ENCODE measurements at regions of chr11 and their contacts with region 1.

Region 1: DNA sequence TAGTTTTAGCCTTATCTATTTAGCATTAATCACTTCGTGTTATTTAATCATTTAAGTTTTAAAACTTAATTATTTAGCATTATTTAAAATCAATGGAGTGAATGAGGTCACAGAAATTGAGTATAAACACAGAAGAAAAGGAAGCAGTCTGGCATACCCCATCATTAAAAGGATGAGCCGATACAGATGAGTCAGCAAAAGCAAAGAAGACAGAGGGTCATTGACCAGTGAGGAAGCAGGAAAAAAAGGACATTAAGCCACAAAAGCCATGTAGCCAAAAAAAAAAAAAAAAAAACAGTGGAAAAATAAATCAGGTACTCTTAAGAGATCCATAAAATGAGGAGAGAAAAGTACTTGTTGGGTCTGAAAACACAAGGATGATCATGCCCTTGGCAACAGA is 71.5 kb downstream of the TYR start:
- DNase-seq: no peak
- H3K4me3 ChIP-seq: no peak overlapping the region
- H3K27ac ChIP-seq: no peak overlapping the region
- H3K4me1 ChIP-seq: no peaks in the 10 kb centered on the region
- CTCF ChIP-seq: no peak

Region 2: DNA sequence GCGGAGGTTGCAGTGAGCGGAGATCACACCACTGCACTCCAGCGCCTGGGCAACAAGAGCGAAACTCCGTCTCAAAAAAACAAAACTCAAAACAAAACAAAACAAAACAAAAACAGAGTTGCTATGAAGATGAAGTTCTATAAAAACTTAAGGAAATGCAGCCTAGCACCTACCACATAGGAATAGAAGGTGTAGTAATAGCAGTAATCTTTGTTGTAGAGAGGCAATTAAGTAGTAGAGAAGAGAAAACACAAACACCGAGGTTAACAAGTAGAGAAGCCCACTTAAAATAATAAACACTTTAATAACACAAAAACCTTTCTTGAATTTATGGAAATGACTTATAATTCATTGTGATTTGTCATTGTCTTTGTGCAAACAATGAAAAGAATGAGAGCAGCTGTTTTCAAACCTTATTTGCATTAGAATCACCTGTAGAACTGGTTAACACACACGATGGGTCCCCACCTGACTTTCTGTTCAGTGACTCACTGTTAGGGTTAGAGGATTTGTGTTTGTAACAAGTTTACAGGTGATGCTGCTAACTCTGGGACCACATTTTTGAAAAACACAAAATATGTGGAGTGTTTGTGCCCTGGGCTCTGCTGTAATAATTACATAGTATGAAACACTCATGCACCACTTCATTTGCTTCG is 28.4 kb before region 1 on chr11:
- CTCF ChIA-PET with region 1: no interaction called
- POLR2A ChIA-PET with region 1: no interaction called
- intact Hi-C with region 1: loop called (anchors 1 kb)
- DNase-seq: no peak
- H3K4me3 ChIP-seq: no peak overlapping the region
- H3K27ac ChIP-seq: no peak overlapping the region
- H3K4me1 ChIP-seq: no peaks in the 10 kb centered on the region
- CTCF ChIP-seq: no peak

Region 3: GRCh38 chr11:89463266-89463780 is 214.1 kb after region 1 on chr11:
- CTCF ChIA-PET with region 1: no interaction called
- POLR2A ChIA-PET with region 1: no interaction called
- intact Hi-C with region 1: no loop called
- DNase-seq: no peak
- H3K4me3 ChIP-seq: no peak overlapping the region
- H3K27ac ChIP-seq: no peak overlapping the region
- H3K4me1 ChIP-seq: no peaks in the 10 kb centered on the region
- CTCF ChIP-seq: no peak

Measured in OCI-LY7 (cell line).